ENCODE measurements at regions of chr13 and their contacts with region 1.

Region 1: GRCh38 chr13:50081679-50082425 is 66.6 kb downstream of the KCNRG start:
- DNase-seq: peak; percentile 98
- ATAC-seq: peak; percentile 82
- H3K4me3 ChIP-seq: peak overlapping the region; percentile 72 to 90
- H3K27ac ChIP-seq: peak overlapping the region; percentile 98
- H3K4me1 ChIP-seq: peaks cover 26 to 44% of the 10 kb centered on the region in 2 experiments
- H3K27me3 ChIP-seq: no peaks in the 10 kb centered on the region
- CTCF ChIP-seq: peak in 2 of 3 experiments; percentile 42 to 44; a peak in 4 of 6 replicates
- POLR2A ChIP-seq: peak; percentile 49
- RAD21 ChIP-seq: no peak

Region 2: DNA sequence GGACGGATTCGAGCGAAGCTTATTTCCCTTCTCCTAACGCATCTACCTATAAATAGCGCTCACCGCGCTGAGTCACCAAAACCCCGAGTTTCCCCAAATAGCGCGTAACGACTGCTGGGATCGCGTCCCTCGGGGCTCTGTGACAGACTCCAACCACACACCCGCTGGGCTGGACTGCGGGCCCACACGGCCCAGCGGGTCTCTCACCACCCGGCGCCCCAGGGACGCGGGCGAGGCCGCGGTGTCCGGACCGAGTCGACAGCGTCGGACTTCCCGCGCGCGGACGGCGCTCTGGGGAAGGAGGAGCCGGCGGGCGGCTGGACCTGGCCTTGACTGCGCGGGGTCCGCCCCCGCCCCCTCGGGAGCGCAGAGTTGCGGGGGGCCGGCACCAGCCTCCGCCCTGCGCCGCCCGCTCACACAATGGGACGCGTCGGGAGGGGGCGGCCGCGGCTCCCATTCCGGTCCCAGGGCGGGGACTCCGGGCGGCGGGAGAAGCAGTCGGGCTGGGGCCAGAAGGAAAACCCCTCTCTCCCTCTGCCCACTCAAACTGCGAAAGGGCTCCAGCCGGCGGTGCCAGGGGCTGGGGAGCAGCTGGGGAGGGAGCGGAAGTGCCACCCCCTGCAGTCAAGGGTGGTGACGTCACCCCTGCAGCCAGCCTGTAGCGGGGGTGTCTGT is 42.1 kb after region 1 on chr13:
- CTCF ChIA-PET with region 1: interaction called, 3 read pairs
- POLR2A ChIA-PET with region 1: interaction called, 11 read pairs
- RAD21 ChIA-PET with region 1: no interaction called
- intact Hi-C with region 1: loop called (anchors 2 kb)
- DNase-seq: peak; percentile 84
- ATAC-seq: peak; percentile 77
- H3K4me3 ChIP-seq: peak overlapping the region; percentile 52 to 76
- H3K27ac ChIP-seq: peak overlapping the region; percentile 99
- H3K4me1 ChIP-seq: peaks cover 17 to 34% of the 10 kb centered on the region in 2 experiments
- H3K27me3 ChIP-seq: no peaks in the 10 kb centered on the region
- CTCF ChIP-seq: 0 out of 6 replicates have a peak, but pooled peaks of 1 of the 3 experiments have one; percentile 3
- POLR2A ChIP-seq: peak; percentile 34
- RAD21 ChIP-seq: no peak

Region 3: GRCh38 chr13:50244713-50245574 is 163.1 kb after region 1 on chr13:
- CTCF ChIA-PET with region 1: no interaction called
- POLR2A ChIA-PET with region 1: no interaction called
- RAD21 ChIA-PET with region 1: no interaction called
- intact Hi-C with region 1: loop called (anchors 5 kb)
- DNase-seq: peak; percentile 79
- ATAC-seq: peak; percentile 98
- H3K4me3 ChIP-seq: peak overlapping the region in 1 of 2 experiments; percentile 33; a peak in 2 of 4 replicates
- H3K27ac ChIP-seq: peak overlapping the region; percentile 33; the same call in 1 of the 2 replicates
- H3K4me1 ChIP-seq: peaks cover 26 to 28% of the 10 kb centered on the region in 2 experiments
- H3K27me3 ChIP-seq: 0 out of 2 replicates have a peak, but pooled peaks cover 3% of the 10 kb centered on the region
- CTCF ChIP-seq: no peak
- POLR2A ChIP-seq: no peak
- RAD21 ChIP-seq: peak; percentile 18; the same call in 1 of the 2 replicates

Region 4: GRCh38 chr13:50801087-50801931 is 719.5 kb after region 1 on chr13:
- CTCF ChIA-PET with region 1: no interaction called
- POLR2A ChIA-PET with region 1: no interaction called
- RAD21 ChIA-PET with region 1: no interaction called
- intact Hi-C with region 1: loop called (anchors 2 kb)
- DNase-seq: peak; percentile 27
- ATAC-seq: peak; percentile 97
- H3K4me3 ChIP-seq: no peak overlapping the region
- H3K27ac ChIP-seq: no peak overlapping the region
- H3K4me1 ChIP-seq: no peaks in the 10 kb centered on the region
- H3K27me3 ChIP-seq: no peaks in the 10 kb centered on the region
- CTCF ChIP-seq: peak; percentile 38 to 64 (median 59); a peak in 5 of 6 replicates
- POLR2A ChIP-seq: no peak
- RAD21 ChIP-seq: peak; percentile 79